ENCODE measurements at regions of chr6 and their contacts with region 1.

Region 1: DNA sequence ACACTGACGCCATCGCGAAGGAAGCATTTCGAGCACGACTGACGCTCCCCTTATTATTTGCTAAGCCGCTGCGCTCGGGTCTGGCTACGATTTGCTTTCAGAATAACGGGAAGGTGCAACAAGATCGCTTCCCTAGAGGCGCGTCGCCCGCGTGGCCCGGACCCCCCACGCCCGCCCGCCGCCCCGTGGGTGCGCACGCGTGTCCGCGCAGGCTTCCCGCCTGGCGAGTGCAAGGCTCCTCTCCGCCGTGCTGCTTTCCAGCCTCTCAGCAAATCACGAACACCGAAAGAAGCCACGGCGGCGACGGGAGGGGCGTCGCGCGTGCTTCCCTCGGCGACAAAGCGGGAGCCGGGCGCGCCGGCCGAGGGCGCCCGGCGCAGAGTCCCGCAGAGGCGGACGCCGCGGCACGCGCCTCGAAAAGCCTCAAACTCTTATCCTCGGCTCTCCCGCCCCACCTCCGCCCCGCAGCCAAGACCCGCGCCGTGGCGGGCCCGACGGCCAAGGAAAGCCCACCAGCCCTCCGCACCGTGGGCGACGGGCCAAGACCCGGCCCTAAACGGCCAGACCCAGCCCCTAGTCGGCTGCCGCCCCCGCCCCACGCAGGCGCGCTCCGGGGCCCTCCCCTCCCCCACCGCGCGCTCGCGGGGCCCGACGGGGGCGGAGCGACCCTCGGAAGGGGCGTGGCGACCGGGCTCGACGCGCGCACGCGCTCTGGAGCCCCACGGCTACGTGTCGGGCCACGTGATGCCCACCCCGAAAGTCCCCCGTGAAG is 987 bp upstream of the QKI start:
- DNase-seq: peak; percentile 91
- H3K4me3 Mint-ChIP-seq: peak overlapping the region; percentile 76
- H3K27ac Mint-ChIP-seq: peak overlapping the region; percentile 88
- H3K4me1 Mint-ChIP-seq: peaks cover 24% of the 10 kb centered on the region
- H3K27me3 Mint-ChIP-seq: no peaks in the 10 kb centered on the region

Region 2: GRCh38 chr6:163170294-163170883 is 243.1 kb before region 1 on chr6:
- CTCF ChIA-PET with region 1: no interaction called
- POLR2A ChIA-PET with region 1: no interaction called
- intact Hi-C with region 1: loop called (anchors 2 kb)
- DNase-seq: peak; percentile 38
- H3K4me3 Mint-ChIP-seq: no peak overlapping the region
- H3K27ac Mint-ChIP-seq: no peak overlapping the region
- H3K4me1 Mint-ChIP-seq: peaks cover 2% of the 10 kb centered on the region
- H3K27me3 Mint-ChIP-seq: peaks cover 6% of the 10 kb centered on the region

Region 3: DNA sequence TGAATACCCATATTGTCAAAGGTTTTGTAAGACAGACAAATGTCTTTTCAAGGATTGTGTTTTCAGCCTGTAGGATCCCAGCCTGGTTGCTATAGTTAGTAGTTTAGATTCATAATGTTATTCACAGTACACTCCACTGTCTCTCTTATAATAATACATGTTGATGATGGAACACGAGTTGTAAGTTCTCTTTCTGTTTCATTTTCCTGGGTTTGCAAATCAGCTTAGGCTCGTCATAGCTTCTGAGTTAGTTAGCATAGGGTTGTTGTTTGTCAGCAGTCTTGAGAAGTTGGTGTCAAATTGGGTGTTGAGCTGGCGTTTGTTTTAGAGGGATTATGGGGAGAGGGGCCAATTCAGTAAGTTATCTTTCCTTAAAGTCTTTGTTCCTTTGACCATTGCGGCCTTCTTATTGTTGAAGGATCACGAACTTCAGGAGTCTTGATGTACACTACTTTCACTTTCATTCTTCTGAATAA is 46.8 kb after region 1 on chr6:
- CTCF ChIA-PET with region 1: interaction called, 7 read pairs
- POLR2A ChIA-PET with region 1: interaction called, 5 read pairs
- intact Hi-C with region 1: loop called (anchors 1 kb)
- DNase-seq: peak; percentile 17
- H3K4me3 Mint-ChIP-seq: peak overlapping the region; percentile 91
- H3K27ac Mint-ChIP-seq: peak overlapping the region; percentile 96
- H3K4me1 Mint-ChIP-seq: peaks cover 66% of the 10 kb centered on the region
- H3K27me3 Mint-ChIP-seq: no peaks in the 10 kb centered on the region

Region 4: DNA sequence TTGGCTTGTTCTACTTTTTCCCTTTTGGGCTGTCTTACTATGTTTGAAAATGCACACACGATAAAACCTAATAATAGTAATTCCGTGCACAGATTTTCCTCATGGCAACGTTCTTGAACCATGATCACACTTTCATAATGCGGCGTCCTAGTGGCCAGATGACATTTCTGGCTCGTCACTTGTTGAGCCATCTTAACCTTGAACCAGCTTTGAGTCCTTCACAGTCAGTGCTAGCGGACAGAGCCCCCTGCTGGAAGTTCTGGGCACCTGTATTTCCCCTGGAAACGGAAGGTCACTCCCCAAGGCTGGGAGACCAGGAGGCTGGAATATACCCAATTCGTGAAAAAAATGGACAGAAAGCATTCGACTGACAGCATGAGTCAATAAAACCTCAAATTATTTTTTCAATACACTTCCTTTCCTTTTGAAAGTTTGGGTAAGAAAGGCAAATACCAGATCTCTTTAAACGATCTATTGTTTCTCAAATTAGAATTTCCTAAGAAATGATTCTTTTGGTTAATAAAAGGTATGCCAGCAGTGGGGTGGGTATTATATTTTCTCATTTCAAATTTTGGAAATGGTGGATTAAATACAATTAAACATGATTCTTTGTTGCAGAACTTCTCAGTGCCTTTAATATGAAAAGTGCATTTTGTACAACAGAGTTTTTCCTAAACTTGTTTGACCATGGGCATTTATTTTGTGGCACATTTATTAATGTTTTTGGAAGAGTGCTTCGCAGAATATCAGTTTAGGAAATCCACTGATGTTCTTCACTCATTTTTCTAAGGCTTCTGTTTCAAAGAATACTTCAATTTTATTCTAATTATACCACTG is 543.3 kb after region 1 on chr6:
- CTCF ChIA-PET with region 1: no interaction called
- POLR2A ChIA-PET with region 1: no interaction called
- intact Hi-C with region 1: loop called (anchors 1 kb)
- DNase-seq: peak; percentile 73
- H3K4me3 Mint-ChIP-seq: no peak overlapping the region
- H3K27ac Mint-ChIP-seq: no peak overlapping the region
- H3K4me1 Mint-ChIP-seq: peaks cover 3% of the 10 kb centered on the region
- H3K27me3 Mint-ChIP-seq: peaks cover 18% of the 10 kb centered on the region